AG04449 (cell line): ENCODE measurements at regions of chr1 and their contacts with region 1.

Region 1: DNA sequence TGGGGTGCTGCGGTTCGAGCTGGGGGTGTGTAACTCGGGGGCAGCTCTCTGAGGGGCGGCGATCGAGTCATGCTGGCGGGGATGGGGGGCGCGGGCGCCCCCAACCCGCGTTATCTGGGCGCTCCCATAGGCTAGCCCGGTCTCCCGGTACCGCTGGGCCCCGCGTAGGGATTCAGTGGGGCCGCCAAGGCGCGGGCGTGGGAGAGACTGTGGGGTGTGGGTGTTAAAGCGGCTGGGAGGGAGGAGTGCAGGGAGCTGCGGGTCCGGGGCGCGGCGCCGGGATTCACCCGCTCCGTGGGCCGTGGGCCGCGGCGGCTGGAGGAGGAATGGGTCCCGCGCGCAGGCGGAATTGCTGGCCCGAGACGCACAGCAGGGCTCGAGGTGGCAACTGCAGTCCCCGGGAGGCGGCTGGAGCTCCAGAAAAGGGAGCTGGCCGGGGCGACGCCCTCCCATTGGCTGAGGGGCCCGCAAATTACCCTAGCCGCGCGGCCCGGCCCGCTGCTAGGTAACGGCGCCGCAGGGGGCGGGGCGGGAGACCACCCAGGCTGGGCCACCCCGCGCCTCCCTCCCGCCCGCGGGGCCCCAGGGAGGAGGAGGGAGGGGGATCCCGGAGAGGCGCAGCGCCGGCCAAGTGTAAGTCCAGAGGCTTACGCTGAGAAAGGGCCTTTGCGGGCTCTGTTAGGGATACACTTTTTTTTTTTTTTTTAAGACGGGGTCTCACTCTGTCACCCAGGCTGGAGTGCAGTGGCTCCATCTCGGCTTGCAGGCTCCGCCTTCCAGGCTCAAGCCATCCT is at the start of gene PTCH2:
- DNase-seq: no peak
- H3K4me3 ChIP-seq: peak within 1 kb of the TSS; percentile 61
- CTCF ChIP-seq: no peak

Region 2: DNA sequence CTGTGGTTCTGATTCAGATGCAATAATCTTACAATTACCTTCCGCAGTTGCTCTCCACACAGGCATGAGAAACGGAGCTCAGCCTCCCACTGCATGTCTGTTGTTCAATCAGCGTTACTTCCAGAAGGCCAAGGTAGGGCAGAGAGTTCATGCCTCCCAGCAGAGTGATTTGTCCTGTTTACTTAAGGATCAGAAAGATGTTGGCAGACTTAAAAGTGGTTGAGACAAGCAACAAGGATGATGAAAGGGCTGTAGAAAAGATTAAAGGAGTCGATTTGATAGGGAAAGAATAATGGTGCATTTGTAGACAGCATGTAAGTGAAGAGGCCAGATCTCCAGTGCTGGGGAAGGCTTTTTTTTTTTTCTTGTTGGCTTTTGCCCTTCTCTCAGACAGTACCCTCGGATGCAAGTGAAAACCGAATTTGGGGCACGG is 141.9 kb before region 1 on chr1:
- CTCF ChIA-PET with region 1: no interaction called
- POLR2A ChIA-PET with region 1: no interaction called
- DNase-seq: no peak
- H3K4me3 ChIP-seq: no peak overlapping the region
- CTCF ChIP-seq: no peak

Region 3: GRCh38 chr1:44985747-44986359 is 142.8 kb after region 1 on chr1:
- CTCF ChIA-PET with region 1: no interaction called
- POLR2A ChIA-PET with region 1: interaction called, 11 read pairs
- DNase-seq: no peak
- H3K4me3 ChIP-seq: peak overlapping the region; percentile 99
- CTCF ChIP-seq: no peak

Region 4: GRCh38 chr1:45172024-45172423 is 329.0 kb after region 1 on chr1:
- CTCF ChIA-PET with region 1: no interaction called
- POLR2A ChIA-PET with region 1: no interaction called
- DNase-seq: no peak
- H3K4me3 ChIP-seq: no peak overlapping the region
- CTCF ChIP-seq: no peak